Activated CD4-positive, alpha-beta T cell treated with anti-CD3 and anti-CD28 coated beads for 36 hours (primary cell): ENCODE measurements at regions of chr3 and their contacts with region 1.

Region 1: DNA sequence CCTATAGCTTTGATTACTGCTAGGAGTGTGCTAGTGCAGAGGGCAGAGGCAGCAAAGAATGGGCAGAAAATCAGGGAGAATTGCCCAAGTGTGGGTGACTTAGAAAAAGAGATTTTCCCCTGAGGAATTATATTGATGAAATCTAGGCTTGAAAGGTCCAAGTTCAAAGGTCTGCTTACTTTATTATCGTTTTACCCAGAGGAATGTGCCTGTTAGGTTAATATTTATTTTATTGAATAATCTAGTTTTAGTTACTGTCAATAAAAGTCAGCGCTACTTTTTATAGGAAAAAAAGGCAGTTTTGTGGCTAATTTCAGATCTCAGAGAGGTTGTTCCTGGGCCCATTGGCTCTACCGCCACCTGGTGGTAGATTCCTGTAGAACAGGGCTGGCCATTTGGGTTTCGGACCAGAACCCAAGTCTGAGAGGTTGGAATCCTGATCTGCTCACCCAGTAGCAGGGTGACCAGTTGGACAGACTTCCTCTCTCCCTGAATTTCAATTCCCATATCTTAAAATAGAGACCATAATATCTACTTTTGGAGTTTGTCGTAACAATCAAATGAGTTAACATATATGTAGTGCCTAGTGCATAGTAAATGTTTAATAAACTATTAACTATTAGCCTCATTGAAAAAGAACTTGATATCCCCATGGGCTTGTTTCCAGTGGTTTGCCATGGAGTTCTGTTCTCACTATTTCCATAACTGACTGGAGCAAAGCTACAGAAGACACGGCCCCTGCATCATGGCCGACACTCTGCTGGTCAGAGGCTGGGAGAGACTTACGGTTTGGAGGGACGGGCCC is 62.7 kb upstream of the ZNF148 start:
- DNase-seq: peak; percentile 76
- ATAC-seq: peak; percentile 60
- H3K4me3 Mint-ChIP-seq: no peak overlapping the region
- H3K27ac Mint-ChIP-seq: no peak overlapping the region
- H3K4me1 Mint-ChIP-seq: peaks cover 3% of the 10 kb centered on the region
- H3K27me3 Mint-ChIP-seq: no peaks in the 10 kb centered on the region

Region 2: DNA sequence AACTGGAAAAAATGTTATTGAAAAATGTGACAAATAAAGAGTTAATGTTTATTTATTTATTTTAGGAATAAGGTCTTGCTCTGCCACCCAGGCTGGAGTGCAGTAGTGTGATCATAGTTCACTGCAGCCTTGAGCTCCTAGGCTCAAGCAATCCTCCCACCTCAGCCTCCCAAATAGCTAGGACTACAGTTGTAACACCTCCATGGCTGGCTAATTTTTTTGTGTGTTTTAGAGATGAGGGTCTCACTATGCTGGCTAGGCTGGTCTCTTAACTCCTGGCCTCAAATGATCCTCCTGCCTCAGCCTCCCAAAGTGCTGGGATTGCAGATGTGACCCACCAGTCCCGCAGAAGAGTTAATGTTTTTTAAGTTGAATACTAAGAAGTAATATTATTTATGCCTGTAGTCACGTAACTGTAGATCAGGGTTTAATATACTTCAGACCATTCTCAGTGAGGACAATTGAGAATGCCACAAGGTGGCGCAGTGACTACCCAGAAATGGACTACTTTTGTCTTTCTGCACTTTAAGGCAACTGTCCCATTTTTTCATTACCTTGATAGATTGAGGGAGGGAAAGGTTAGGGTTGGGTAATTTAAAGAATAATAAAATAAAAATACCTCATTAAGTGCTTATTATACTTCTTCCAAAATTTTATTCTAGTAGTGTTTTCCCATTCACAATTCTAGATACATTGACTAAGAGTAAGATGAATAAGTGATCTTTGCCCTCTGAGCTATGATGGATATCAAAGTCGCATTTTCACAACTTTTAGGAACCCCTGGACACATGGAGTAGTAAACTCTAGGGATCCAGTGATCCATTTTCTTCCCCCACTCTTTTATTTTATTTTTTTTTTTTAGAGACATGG is 509.3 kb before region 1 on chr3:
- CTCF ChIA-PET with region 1: interaction called, 5 read pairs
- POLR2A ChIA-PET with region 1: no interaction called
- intact Hi-C with region 1: loop called (anchors 1 kb)
- DNase-seq: peak; percentile 79
- ATAC-seq: no peak
- H3K4me3 Mint-ChIP-seq: no peak overlapping the region
- H3K27ac Mint-ChIP-seq: no peak overlapping the region
- H3K4me1 Mint-ChIP-seq: no peaks in the 10 kb centered on the region
- H3K27me3 Mint-ChIP-seq: peaks cover 8% of the 10 kb centered on the region

Region 3: GRCh38 chr3:124995460-124995994 is 442.3 kb before region 1 on chr3:
- CTCF ChIA-PET with region 1: interaction called, 22 read pairs
- POLR2A ChIA-PET with region 1: no interaction called
- intact Hi-C with region 1: loop called (anchors 1 kb)
- DNase-seq: peak; percentile 63
- ATAC-seq: peak; percentile 92
- H3K4me3 Mint-ChIP-seq: no peak overlapping the region
- H3K27ac Mint-ChIP-seq: no peak overlapping the region
- H3K4me1 Mint-ChIP-seq: no peaks in the 10 kb centered on the region
- H3K27me3 Mint-ChIP-seq: no peaks in the 10 kb centered on the region

Region 4: DNA sequence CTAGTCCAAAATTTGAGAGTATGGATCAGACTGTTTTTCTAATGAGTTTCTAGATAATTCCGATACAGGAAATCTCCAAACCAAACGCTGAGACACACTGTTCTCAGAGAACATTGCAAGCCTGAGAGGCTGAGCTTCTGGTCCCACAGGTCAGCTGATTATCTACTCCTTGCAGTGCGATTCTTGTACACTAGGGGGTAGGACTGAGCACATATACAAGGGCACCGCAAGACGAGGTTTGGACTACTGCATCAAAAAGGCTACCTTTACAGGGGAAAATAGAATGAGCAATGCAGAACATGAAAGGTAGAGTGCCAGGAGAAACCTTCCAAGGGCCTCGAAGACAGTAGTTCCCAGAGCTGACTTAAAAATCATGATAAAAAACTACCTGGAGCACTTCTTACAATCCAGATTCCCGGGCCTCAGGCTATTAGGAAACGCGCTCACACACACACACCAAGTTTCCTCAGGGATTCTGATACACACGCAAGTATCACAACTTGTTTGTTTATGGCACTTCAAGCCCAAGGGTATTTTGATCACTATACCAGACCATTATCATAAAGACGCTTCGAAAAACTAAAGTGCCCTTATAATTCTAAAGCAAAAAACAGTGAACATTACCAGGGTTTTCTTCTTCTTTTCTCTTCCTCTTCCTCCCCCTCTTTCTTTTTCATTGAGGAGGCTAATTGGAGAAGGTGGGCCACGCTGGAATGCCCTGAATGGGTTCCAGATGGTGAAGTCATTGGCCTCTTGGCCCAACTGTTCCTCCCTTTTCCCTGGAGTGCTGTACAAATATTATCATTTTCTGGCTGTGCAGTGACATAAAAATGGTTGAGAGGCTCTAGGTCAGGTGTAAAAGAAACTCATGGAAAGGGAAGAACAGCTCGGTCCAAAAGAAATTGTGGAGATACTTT is 287.1 kb before region 1 on chr3:
- CTCF ChIA-PET with region 1: interaction called, 11 read pairs
- POLR2A ChIA-PET with region 1: no interaction called
- intact Hi-C with region 1: loop called (anchors 1 kb)
- DNase-seq: peak; percentile 81
- ATAC-seq: peak; percentile 95
- H3K4me3 Mint-ChIP-seq: no peak overlapping the region
- H3K27ac Mint-ChIP-seq: no peak overlapping the region
- H3K4me1 Mint-ChIP-seq: peaks cover 8% of the 10 kb centered on the region
- H3K27me3 Mint-ChIP-seq: peaks cover 13% of the 10 kb centered on the region

Region 5: DNA sequence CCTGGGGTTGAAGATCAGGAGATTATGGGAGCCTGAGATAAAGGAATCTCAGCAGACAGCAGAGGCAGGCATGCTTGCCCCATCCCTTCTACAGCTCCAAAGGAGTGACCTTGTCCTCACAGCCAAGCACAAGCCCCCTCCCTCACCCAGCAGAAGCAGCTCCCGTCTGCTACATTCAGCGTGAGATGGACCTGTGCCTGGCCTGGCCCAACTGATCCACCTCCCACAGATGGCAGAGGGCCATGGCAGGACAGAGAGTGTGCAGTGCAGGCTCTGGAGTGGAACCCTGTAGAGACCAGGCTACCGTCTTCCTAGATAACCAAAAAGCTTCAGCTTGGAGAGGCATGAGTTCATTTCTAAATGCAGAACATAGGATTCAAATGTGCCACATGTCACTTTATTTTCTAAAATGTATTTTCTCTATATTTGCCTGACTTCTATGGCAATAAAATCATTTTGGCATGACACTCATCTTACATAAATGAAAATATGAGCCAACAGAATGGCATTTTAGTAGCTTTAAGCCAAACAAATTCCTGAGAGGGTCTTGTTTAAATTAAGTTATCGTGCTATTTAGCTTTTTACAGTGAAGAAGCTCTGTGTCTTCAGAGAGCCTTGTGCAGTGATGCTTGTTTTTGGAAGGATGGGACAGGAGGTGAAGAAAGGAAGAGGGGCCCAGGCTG is 269.0 kb before region 1 on chr3:
- CTCF ChIA-PET with region 1: no interaction called
- POLR2A ChIA-PET with region 1: no interaction called
- intact Hi-C with region 1: no loop called
- DNase-seq: no peak
- ATAC-seq: no peak
- H3K4me3 Mint-ChIP-seq: no peak overlapping the region
- H3K27ac Mint-ChIP-seq: no peak overlapping the region
- H3K4me1 Mint-ChIP-seq: no peaks in the 10 kb centered on the region
- H3K27me3 Mint-ChIP-seq: peaks cover 3% of the 10 kb centered on the region

Region 6: DNA sequence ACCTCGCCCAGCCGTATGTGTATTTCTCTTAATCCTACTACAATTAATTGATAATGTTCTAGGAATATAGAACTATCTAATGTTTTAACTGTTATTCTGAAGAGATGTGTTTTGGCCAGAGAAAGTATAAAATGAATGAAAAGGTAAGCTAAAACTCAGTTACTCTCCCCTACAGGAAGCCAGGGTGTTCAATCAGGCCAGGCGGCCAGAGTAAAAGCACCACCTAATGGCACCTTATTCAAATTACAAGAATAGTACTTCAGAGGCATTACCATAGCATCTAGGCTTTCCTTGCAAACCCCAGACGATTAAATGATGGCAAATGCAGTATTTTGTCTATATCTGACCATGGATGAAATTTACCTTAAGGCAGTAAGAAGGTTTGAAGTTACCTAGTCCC is 235.6 kb before region 1 on chr3:
- CTCF ChIA-PET with region 1: no interaction called
- POLR2A ChIA-PET with region 1: no interaction called
- intact Hi-C with region 1: loop called (anchors 5 to 10 kb)
- DNase-seq: peak; percentile 35
- ATAC-seq: peak; percentile 74
- H3K4me3 Mint-ChIP-seq: no peak overlapping the region
- H3K27ac Mint-ChIP-seq: no peak overlapping the region
- H3K4me1 Mint-ChIP-seq: no peaks in the 10 kb centered on the region
- H3K27me3 Mint-ChIP-seq: peaks cover 9% of the 10 kb centered on the region

Region 7: GRCh38 chr3:125231895-125232294 is 205.9 kb before region 1 on chr3:
- CTCF ChIA-PET with region 1: no interaction called
- POLR2A ChIA-PET with region 1: no interaction called
- intact Hi-C with region 1: no loop called
- DNase-seq: no peak
- ATAC-seq: peak; percentile 92
- H3K4me3 Mint-ChIP-seq: no peak overlapping the region
- H3K27ac Mint-ChIP-seq: peak overlapping the region; percentile 82
- H3K4me1 Mint-ChIP-seq: peaks cover 22% of the 10 kb centered on the region
- H3K27me3 Mint-ChIP-seq: no peaks in the 10 kb centered on the region

Region 8: DNA sequence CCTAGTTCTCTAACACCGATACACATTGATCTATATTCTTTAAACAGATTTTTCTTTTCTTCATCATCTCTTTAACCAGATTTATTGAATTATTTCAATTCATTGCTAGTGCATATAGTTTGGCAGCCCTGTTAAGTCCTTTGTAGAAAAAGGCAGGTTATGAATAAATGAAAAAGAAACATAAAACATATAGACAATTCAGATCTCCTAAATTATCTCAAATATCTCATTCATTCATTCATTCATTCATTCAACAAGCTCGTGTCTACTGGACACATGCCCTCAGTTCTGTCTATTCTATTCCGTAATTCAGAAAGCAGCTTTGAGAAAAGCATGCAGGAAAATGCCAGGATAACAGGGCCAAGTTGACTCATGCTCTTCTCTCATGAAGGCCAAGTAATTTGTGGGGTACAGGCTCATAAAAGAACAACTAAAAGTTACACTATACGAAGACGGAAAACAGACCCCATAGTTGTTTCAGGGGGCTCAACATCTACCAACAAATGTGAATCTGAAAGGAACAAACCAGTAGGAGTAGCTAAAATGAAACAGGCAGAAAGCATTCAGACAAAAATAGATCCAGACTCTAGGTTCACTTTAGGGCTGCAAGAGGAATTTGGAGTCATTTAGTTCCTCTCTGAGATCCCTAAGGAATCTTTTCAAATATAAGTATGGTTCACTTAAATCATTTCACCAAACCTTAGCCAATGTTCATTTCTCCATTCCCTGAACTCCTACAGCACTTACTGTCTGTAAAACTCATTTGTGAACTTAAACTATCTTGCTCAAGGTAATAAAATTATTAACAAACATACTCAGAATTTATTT is 70.2 kb before region 1 on chr3:
- CTCF ChIA-PET with region 1: no interaction called
- POLR2A ChIA-PET with region 1: no interaction called
- intact Hi-C with region 1: no loop called
- DNase-seq: no peak
- ATAC-seq: no peak
- H3K4me3 Mint-ChIP-seq: no peak overlapping the region
- H3K27ac Mint-ChIP-seq: no peak overlapping the region
- H3K4me1 Mint-ChIP-seq: peaks cover 63% of the 10 kb centered on the region
- H3K27me3 Mint-ChIP-seq: no peaks in the 10 kb centered on the region